Naive thymus-derived CD8-positive, alpha-beta T cell (primary cell): ENCODE measurements at regions of chr1 and their contacts with region 1.

Region 1: GRCh38 chr1:116345843-116346242 is 27.2 kb upstream of the ATP1A1 start:
- DNase-seq: peak; percentile 32 to 94 (median 78)
- ATAC-seq: peak; percentile 90 to 93
- H3K4me3 Mint-ChIP-seq: peak overlapping the region in 9 of 10 donors; percentile 33 to 77 (median 49)
- H3K27ac Mint-ChIP-seq: peak overlapping the region; percentile 88 to 99 (median 96)
- H3K4me1 Mint-ChIP-seq: peaks cover 25 to 78% (median 58%) of the 10 kb centered on the region in 4 donors
- H3K27me3 Mint-ChIP-seq: no peaks in the 10 kb centered on the region

Region 2: DNA sequence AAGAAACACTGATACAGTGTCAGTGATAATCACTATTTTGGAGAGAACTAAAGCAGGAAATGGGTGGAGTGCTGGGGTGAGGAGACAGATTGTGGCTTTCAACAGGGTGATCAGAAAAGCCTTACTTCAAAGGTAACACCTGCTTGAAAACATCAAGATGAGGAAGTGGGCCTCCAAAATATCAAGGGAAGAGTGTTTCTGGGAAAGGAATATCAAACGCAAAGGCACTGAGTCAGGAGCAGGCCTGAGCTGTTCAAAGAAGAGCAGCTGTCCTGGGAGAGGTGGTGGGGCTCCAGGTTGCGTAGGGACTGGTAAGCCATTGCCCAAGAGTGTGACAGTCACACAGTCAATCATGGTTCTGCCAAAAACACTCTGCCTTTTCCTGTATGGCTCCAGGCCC is 19.9 kb before region 1 on chr1:
- POLR2A ChIA-PET with region 1: interaction called, 10 read pairs
- DNase-seq: peak; percentile 18 to 79 (median 46)
- ATAC-seq: peak; percentile 91 to 93
- H3K4me3 Mint-ChIP-seq: peak overlapping the region; percentile 60 to 85 (median 70)
- H3K27ac Mint-ChIP-seq: peak overlapping the region; percentile 90 to 98 (median 94)
- H3K4me1 Mint-ChIP-seq: peaks cover 46 to 92% (median 88%) of the 10 kb centered on the region in 4 donors
- H3K27me3 Mint-ChIP-seq: no peaks in the 10 kb centered on the region

Region 3: GRCh38 chr1:116334015-116334547 is 11.8 kb before region 1 on chr1:
- POLR2A ChIA-PET with region 1: interaction called, 10 read pairs
- DNase-seq: no peak
- ATAC-seq: no peak
- H3K4me3 Mint-ChIP-seq: peak overlapping the region in 1 of 10 donors; percentile 43
- H3K27ac Mint-ChIP-seq: peak overlapping the region in 7 of 10 donors; percentile 3 to 83 (median 47)
- H3K4me1 Mint-ChIP-seq: peaks cover 30 to 64% (median 48%) of the 10 kb centered on the region in 4 donors
- H3K27me3 Mint-ChIP-seq: no peaks in the 10 kb centered on the region